T-cell (primary cell): ENCODE measurements at regions of chr4 and their contacts with region 1.

Region 1: DNA sequence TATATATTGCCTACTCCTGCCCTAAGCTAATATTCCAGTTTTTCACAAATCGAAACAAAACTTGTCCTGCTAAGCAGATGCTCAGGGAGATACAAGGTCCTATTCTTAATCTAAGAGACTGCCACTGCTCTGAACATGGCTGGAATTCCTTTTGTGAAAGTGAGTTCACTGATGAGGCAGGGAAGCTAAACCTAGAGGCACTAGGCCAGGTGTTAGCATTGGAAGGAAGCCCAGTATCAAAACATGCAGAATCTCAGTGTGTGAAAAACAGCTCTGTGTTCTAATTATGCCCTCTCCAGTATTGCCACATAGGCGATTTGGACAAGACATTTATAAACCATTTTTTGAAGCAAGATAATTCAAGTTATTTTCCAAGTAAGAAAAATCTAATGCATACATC is 47.6 kb downstream of the ABCG2 start:
- DNase-seq: no peak
- ATAC-seq: no peak
- H3K4me3 ChIP-seq: no peak overlapping the region
- H3K4me3 Mint-ChIP-seq: no peak overlapping the region
- H3K27ac ChIP-seq: no peak overlapping the region
- H3K27ac Mint-ChIP-seq: no peak overlapping the region
- H3K4me1 ChIP-seq: no peaks in the 10 kb centered on the region
- H3K4me1 Mint-ChIP-seq: no peaks in the 10 kb centered on the region
- H3K27me3 ChIP-seq: no peaks in the 10 kb centered on the region
- H3K27me3 Mint-ChIP-seq: no peaks in the 10 kb centered on the region

Region 2: DNA sequence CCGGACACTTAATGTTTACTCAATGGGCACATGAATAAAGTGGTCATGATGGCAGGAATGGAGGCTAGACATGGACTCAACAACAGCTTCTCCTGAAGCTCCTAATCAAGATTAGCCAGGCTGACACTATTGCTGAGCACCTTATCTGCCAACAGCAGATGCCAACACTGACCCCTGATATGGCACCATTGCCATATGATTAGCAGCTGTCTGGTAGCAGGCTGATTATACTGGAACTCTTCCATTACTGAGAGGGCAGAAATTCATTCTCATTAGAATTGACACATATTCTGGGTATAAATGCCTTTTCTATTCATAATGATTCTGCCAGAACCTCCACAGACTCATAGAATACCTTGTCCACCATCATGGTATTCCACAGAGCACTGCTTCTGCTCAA is 1194.4 kb before region 1 on chr4:
- CTCF ChIA-PET with region 1: no interaction called
- POLR2A ChIA-PET with region 1: interaction called in 1 of 2 experiments, 18 read pairs
- DNase-seq: no peak
- ATAC-seq: no peak
- H3K4me3 ChIP-seq: no peak overlapping the region
- H3K4me3 Mint-ChIP-seq: no peak overlapping the region
- H3K27ac ChIP-seq: no peak overlapping the region
- H3K27ac Mint-ChIP-seq: no peak overlapping the region
- H3K4me1 ChIP-seq: no peaks in the 10 kb centered on the region
- H3K4me1 Mint-ChIP-seq: peaks cover 0 to 2% (median under 1%) of the 10 kb centered on the region in 3 donors
- H3K27me3 ChIP-seq: no peaks in the 10 kb centered on the region
- H3K27me3 Mint-ChIP-seq: no peaks in the 10 kb centered on the region